OCI-LY7 (cell line): ENCODE measurements at regions of chr19 and their contacts with region 1.

Region 1: DNA sequence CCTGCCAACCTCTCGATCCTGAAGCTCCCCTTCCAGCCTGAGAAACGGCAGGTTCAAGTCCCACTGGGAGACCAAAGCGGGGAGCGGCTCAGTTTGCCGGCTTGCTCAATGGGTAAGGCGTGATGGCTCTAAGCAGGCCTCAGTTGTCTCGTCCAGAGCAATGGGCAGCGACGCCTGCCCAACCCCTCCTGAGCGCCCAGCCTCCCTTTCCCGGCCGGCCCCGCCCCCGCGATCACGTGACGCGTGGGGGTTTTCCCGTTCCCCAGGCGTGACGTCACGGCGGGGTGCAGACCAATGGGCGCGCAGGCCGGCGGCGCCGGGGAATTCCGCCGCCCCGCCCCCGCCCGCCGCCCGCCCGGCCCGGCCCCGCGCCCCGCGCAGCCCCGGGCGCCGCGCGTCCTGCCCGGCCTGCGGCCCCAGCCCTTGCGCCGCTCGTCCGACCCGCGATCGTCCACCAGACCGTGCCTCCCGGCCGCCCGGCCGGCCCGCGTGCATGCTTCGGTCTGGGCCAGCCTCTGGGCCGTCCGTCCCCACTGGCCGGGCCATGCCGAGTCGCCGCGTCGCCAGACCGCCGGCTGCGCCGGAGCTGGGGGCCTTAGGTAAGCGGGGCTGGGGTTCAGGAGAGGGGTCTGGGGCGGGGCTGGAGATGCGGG is at the start of gene RELB:
- DNase-seq: peak; percentile 95
- H3K4me3 ChIP-seq: peak within 1 kb of the TSS; percentile 94
- H3K27ac ChIP-seq: peak within 1 kb of the TSS; percentile 96
- H3K4me1 ChIP-seq: peaks cover 67% of the 10 kb centered on the region
- CTCF ChIP-seq: no peak
- total RNA-seq, gene RELB: 36.4 and 36.9 TPM in 2 replicates

Region 2: GRCh38 chr19:44752816-44753618 is 248.2 kb before region 1 on chr19:
- CTCF ChIA-PET with region 1: no interaction called
- POLR2A ChIA-PET with region 1: no interaction called
- intact Hi-C with region 1: loop called (anchors 10 kb)
- DNase-seq: peak; percentile 96
- H3K4me3 ChIP-seq: peak overlapping the region; percentile 84
- H3K27ac ChIP-seq: peak overlapping the region; percentile 95
- H3K4me1 ChIP-seq: peaks cover 60% of the 10 kb centered on the region
- CTCF ChIP-seq: 0 out of 2 replicates have a peak, but pooled peaks have one; percentile 20

Region 3: GRCh38 chr19:44960906-44961728 is 40.1 kb before region 1 on chr19:
- CTCF ChIA-PET with region 1: no interaction called
- POLR2A ChIA-PET with region 1: interaction called, 6 read pairs
- intact Hi-C with region 1: loop called (anchors 1 kb)
- DNase-seq: peak; percentile 89
- H3K4me3 ChIP-seq: peak overlapping the region; percentile 75
- H3K27ac ChIP-seq: peak overlapping the region; percentile 82
- H3K4me1 ChIP-seq: peaks cover 59% of the 10 kb centered on the region
- CTCF ChIP-seq: no peak

Region 4: DNA sequence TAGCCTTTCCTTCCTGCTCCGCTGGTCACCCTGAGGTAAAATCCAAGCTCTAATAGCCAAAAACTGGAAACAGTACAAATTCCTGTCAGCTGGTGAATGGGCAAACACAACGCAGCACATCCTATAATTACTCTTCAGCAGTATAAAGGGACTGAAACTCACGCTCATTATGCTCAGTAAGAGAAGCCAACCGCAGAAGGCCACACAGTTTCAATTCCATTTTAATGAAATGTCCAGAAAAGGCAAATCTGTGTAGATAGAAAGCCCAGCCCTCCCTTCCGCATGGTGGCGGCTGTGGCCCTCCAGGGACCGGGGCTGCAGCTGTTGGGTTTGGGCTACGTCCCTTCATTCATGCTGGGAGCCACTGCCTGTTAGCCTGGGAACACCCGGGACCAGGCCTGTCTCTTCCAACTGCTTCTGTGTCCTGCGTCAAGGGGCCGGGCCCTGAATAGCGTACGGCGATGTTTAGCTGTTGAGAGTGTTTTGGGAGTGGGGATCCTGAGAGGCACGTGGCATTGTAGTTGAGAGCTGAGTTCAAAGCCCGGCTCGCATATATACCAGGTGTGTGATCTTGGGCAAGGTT is 136.1 kb after region 1 on chr19:
- CTCF ChIA-PET with region 1: no interaction called
- POLR2A ChIA-PET with region 1: interaction called, 3 read pairs
- intact Hi-C with region 1: loop called (anchors 5 kb)
- DNase-seq: peak; percentile 95
- H3K4me3 ChIP-seq: peak overlapping the region; percentile 61
- H3K27ac ChIP-seq: peak overlapping the region; percentile 98
- H3K4me1 ChIP-seq: peaks cover 70% of the 10 kb centered on the region
- CTCF ChIP-seq: no peak

Region 5: DNA sequence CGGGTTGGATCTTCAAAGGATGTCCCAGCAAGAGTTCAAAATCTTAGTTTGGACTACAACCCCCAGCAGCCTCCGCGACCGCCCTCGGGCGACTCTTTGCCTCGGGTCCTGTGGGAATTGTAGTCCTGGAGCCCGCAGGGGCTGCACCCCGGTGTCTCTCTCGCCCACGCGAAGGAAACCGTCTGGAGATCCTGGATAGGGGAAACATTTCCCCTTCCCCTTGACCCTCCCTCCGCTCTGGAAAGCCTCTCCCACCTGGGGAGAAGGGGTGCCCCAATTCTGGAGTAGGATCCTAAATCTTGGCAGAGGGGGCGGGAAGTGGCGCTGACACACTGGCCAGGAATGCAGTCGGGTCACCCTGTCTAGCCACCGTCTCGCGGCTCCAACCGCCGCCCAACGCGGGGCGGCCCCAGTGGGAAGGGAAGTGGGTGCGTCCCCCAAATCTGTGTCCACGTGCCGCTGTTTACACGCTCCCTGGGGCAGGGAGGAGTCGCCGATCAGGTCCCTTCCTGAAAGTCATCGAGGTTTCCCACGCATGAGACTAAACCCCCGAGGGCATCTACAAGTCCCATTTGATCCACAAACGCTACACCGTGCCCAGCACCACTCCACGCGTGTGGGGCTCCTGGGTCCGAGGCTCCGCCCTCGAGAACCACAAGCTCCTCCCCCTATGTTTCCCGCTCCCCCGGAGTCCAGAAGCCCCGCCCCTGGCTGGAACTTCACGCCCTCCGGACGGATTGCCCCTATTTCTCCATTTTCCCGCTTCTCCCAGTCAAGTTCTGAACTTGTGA is 404.4 kb after region 1 on chr19:
- CTCF ChIA-PET with region 1: no interaction called
- POLR2A ChIA-PET with region 1: no interaction called
- intact Hi-C with region 1: loop called (anchors 5 kb)
- DNase-seq: peak; percentile 94
- H3K4me3 ChIP-seq: peak overlapping the region; percentile 89
- H3K27ac ChIP-seq: peak overlapping the region; percentile 69
- H3K4me1 ChIP-seq: peaks cover 38% of the 10 kb centered on the region
- CTCF ChIP-seq: no peak